ENCODE measurements at regions of chr17 and their contacts with region 1.

Region 1: GRCh38 chr17:7045909-7046724 is 2.2 kb upstream of the SLC16A11 start:
- DNase-seq: no peak
- H3K4me3 ChIP-seq: peak overlapping the region; percentile 25 to 27
- H3K27ac ChIP-seq: peak overlapping the region; percentile 64 to 72
- H3K4me1 ChIP-seq: peaks cover 0 to 19% of the 10 kb centered on the region in 2 donors
- H3K27me3 ChIP-seq: peaks cover 0 to 15% of the 10 kb centered on the region in 2 donors
- CTCF ChIP-seq: peak; percentile 72 to 89 (median 85)
- POLR2A ChIP-seq: no peak

Region 2: GRCh38 chr17:7141824-7142223 is 95.7 kb after region 1 on chr17:
- intact Hi-C with region 1: loop called (anchors 5 kb)
- DNase-seq: no peak
- H3K4me3 ChIP-seq: no peak overlapping the region
- H3K27ac ChIP-seq: no peak overlapping the region
- H3K4me1 ChIP-seq: no peaks in the 10 kb centered on the region
- H3K27me3 ChIP-seq: no peaks in the 10 kb centered on the region
- CTCF ChIP-seq: no peak
- POLR2A ChIP-seq: no peak

Measured in uterus (tissue), 4 donors.